Activated naive CD4-positive, alpha-beta T cell treated with anti-CD3 and anti-CD28 coated beads for 36 hours (primary cell): ENCODE measurements at regions of chr11 and their contacts with region 1.

Region 1: GRCh38 chr11:124673333-124674167 is at the starts of genes SIAE and SPA17:
- DNase-seq: peak; percentile 93
- H3K4me3 Mint-ChIP-seq: peak within 1 kb of the TSS; percentile 88
- H3K27ac Mint-ChIP-seq: peak within 1 kb of the TSS; percentile 75
- H3K4me1 Mint-ChIP-seq: peaks cover 26% of the 10 kb centered on the region
- H3K27me3 Mint-ChIP-seq: no peaks in the 10 kb centered on the region
- total RNA-seq, gene SIAE: 7.8 to 10.8 TPM
- total RNA-seq, gene SPA17: 3.9 to 5.1 TPM

Region 2: DNA sequence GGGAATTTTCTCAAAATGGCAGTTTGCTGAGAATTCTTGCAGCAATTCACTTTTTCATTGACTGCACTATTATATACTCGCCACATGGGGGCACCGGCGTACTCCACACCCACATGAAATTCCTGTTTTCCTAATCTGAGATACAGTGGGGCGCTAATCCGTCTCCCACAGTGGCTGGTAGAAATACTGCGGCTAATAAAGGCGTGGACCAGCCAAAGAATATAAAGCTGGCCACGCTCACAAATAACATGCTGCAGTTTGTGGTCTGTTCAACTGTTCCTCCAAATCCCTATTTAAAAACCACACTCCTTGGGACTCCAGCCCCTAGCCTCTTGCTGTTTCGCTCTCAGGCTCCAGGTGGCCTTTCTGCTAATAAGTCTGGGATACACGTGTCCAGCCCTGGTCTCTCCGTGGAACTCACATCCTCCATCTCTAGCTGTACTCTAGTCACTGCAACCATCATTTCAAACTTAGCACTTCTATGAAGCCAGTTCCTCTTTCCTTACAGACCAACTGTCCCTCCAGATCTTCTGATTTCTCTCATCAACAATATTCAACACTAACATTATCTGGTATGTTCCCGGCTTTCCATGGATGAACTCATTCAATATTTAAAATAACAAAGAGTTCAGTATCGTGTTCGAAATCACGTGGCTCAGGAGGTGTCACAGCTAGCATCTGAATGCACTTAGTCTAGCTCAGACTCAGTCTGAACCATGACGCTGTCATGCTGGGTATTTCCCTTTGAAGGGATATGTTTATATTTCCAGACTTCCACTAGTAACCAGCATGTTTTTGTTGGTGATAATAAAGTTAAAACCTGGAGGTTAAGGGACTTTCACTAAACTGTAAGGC is 28.9 kb before region 1 on chr11:
- CTCF ChIA-PET with region 1: interaction called, 14 read pairs
- intact Hi-C with region 1: loop called (anchors 2 kb)
- DNase-seq: peak; percentile 26
- H3K4me3 Mint-ChIP-seq: no peak overlapping the region
- H3K27ac Mint-ChIP-seq: no peak overlapping the region
- H3K4me1 Mint-ChIP-seq: no peaks in the 10 kb centered on the region
- H3K27me3 Mint-ChIP-seq: no peaks in the 10 kb centered on the region

Region 3: DNA sequence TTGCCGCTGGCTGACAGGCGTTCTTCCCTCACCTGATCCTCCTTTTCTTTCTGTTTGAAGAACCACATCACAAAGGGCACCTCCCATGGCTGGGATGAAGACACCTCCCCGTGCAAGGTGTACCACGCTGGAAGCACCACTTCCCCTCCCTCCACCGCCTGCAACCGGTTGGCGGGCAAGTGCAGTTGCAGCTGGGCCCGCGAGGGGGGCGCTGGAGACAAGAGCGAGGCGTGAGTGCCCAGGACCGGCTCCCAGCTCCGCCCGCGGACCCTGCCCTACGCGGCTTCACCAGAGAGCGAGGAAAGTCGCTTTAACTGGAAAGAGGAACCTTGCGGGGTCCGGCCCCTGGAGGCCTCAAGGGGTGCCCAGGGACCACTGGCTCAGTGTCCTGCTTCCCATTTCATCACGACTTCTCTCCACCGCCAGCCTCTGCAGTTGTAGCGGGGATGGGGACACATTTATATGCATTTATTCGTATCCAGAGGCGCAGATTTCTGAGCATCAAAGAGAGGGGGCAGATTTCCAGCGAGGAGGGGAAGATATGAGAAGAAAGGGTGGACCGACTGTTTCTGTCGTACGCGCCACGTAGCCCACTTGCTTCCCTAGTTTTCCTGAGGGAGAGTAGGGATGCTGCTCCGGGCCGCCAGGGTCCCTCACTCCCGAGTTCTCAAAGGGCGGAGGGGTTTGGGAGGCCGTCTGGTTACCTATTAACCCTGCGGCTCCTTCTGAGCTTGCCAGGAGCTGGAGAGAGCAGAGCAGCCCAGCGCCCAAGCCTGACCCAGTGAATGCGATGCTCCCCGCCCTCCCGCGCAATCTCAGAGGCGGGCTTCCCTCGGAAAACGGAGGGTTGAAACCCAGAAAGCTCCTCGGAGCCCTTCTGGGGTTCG is 85.0 kb after region 1 on chr11:
- CTCF ChIA-PET with region 1: interaction called, 83 read pairs
- intact Hi-C with region 1: loop called (anchors 1 kb)
- DNase-seq: peak; percentile 80
- H3K4me3 Mint-ChIP-seq: peak overlapping the region; percentile 56
- H3K27ac Mint-ChIP-seq: no peak overlapping the region
- H3K4me1 Mint-ChIP-seq: peaks cover 30% of the 10 kb centered on the region
- H3K27me3 Mint-ChIP-seq: peaks cover 45% of the 10 kb centered on the region

Region 4: GRCh38 chr11:124800226-124800929 is 126.8 kb after region 1 on chr11 and contains the start of gene MSANTD2:
- CTCF ChIA-PET with region 1: interaction called, 22 read pairs
- intact Hi-C with region 1: loop called (anchors 1 kb)
- DNase-seq: peak; percentile 82
- H3K4me3 Mint-ChIP-seq: peak within 1 kb of the TSS; percentile 85
- H3K27ac Mint-ChIP-seq: peak within 1 kb of the TSS; percentile 92
- H3K4me1 Mint-ChIP-seq: peaks cover 32% of the 10 kb centered on the region
- H3K27me3 Mint-ChIP-seq: no peaks in the 10 kb centered on the region
- total RNA-seq, gene MSANTD2: 3.8 to 4.2 TPM

Region 5: DNA sequence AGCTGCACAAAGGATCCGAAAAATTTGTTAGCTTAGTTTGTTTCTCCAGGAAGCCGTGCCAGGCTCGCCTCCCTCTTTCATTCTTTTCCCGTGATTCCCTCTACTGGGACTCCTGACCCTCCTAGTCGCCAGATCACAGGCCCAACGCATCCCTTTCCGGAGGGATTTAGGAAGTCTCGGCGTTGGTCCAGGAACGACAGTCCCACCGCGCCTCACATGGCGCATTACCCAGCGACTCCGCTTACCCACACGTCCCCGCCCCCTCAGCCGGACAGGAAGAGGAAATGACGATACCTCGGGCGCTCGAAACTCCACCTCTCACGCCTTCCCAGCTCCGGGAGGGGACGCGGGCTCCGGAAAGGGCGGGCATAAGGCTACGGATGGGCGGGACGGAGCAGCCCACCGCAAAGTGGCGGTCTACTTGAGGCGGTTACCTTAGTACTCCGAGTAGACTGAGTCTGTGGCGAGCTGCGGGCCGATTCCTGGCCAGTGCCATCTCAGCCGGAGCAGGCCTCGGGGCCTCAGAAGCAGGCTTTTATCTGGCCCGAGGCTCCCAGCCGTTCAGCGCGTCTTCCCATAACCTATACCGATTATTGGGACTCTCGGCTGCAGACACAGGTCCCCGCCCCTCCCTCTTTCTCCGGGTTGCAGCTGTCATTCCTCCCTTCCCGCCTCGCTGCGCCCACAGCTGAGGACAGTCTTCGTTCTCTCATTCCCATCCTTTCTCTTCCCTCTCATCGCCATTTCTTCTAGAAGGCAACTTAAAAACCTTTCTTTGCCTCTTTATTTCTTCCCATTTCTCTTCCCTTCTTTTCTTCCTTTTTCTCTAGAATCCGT is 280.4 kb after region 1 on chr11 and contains the start of gene CCDC15:
- CTCF ChIA-PET with region 1: no interaction called
- intact Hi-C with region 1: loop called (anchors 1 kb)
- DNase-seq: peak; percentile 97
- H3K4me3 Mint-ChIP-seq: no peak within 1 kb of the TSS
- H3K27ac Mint-ChIP-seq: no peak within 1 kb of the TSS
- H3K4me1 Mint-ChIP-seq: peaks cover 7% of the 10 kb centered on the region
- H3K27me3 Mint-ChIP-seq: no peaks in the 10 kb centered on the region
- total RNA-seq, gene CCDC15: 6.1 to 7.3 TPM

Region 6: GRCh38 chr11:125001079-125001778 is 327.7 kb after region 1 on chr11:
- CTCF ChIA-PET with region 1: no interaction called
- intact Hi-C with region 1: no loop called
- DNase-seq: no peak
- H3K4me3 Mint-ChIP-seq: no peak overlapping the region
- H3K27ac Mint-ChIP-seq: no peak overlapping the region
- H3K4me1 Mint-ChIP-seq: no peaks in the 10 kb centered on the region
- H3K27me3 Mint-ChIP-seq: no peaks in the 10 kb centered on the region

Region 7: DNA sequence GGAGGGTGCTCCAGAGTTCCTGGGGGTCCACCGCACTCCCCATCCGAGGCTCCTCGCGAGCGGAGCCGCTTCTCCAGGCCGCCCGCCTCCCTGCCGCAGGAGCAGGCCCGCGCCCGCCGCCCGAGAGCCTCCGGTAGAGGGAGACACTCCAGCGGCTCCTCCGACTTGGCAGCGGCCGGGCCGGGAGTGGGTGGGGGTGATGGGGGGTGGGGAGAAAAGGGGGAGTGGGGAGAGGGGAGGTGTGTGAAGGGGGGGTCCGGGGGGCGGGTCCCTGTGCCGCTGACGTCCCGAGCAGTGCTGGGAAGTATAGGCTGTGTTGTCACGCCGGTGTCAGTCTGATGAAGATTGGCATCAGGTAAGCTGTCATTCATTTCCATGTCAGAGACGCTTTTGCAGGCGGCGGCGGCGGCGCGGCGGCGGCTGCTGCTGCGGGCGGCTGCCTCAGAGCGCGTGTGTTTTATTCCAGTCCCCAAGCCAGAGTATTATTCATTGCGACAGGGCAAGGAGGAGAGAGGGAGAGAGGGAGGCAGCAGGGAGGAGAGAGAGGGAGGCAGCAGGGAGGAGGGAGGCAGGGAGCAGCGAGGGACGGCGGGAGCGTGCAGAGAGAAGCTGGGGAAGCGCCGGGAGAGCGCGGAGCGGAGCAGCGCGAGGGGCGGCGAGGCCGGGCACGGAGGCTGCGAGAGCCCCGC is 491.0 kb after region 1 on chr11 and contains the start of gene PKNOX2:
- CTCF ChIA-PET with region 1: no interaction called
- intact Hi-C with region 1: loop called (anchors 5 kb)
- DNase-seq: peak; percentile 74
- H3K4me3 Mint-ChIP-seq: peak within 1 kb of the TSS; percentile 85
- H3K27ac Mint-ChIP-seq: no peak within 1 kb of the TSS
- H3K4me1 Mint-ChIP-seq: peaks cover 15% of the 10 kb centered on the region
- H3K27me3 Mint-ChIP-seq: peaks cover 43% of the 10 kb centered on the region
- total RNA-seq, gene PKNOX2: not detected